ENCODE measurements at regions of chr10 and their contacts with region 1.

Region 1: GRCh38 chr10:110567201-110568054 is at the start of gene SMC3:
- ATAC-seq: peak; percentile 84 to 90 (median 88)
- H3K4me3 ChIP-seq: peak within 1 kb of the TSS; percentile 77 to 89 (median 85)
- H3K27ac ChIP-seq: peak within 1 kb of the TSS; percentile 99
- H3K4me1 ChIP-seq: peaks cover 6 to 21% of the 10 kb centered on the region in 2 donors
- total RNA-seq, gene SMC3: 15.2 to 92.6 (median 46.6) TPM

Region 2: GRCh38 chr10:110304780-110305421 is 262.5 kb before region 1 on chr10 and contains the start of gene SMNDC1:
- in situ Hi-C with region 1: loop called in 2 of 9 experiments (anchors 25 kb)
- ATAC-seq: peak; percentile 82 to 96 (median 94)
- H3K4me3 ChIP-seq: peak within 1 kb of the TSS; percentile 59 to 91 (median 67)
- H3K27ac ChIP-seq: peak within 1 kb of the TSS; percentile 88 to 93
- H3K4me1 ChIP-seq: peaks cover 6 to 24% of the 10 kb centered on the region in 2 donors
- total RNA-seq, gene SMNDC1: 8.3 to 24.0 (median 12.5) TPM

Region 3: GRCh38 chr10:110724116-110724921 is 156.9 kb after region 1 on chr10:
- in situ Hi-C with region 1: no loop called
- ATAC-seq: peak in 2 of 8 experiments; percentile 34 to 58
- H3K4me3 ChIP-seq: no peak overlapping the region
- H3K27ac ChIP-seq: no peak overlapping the region
- H3K4me1 ChIP-seq: peaks cover 17 to 50% of the 10 kb centered on the region in 2 donors

Region 4: DNA sequence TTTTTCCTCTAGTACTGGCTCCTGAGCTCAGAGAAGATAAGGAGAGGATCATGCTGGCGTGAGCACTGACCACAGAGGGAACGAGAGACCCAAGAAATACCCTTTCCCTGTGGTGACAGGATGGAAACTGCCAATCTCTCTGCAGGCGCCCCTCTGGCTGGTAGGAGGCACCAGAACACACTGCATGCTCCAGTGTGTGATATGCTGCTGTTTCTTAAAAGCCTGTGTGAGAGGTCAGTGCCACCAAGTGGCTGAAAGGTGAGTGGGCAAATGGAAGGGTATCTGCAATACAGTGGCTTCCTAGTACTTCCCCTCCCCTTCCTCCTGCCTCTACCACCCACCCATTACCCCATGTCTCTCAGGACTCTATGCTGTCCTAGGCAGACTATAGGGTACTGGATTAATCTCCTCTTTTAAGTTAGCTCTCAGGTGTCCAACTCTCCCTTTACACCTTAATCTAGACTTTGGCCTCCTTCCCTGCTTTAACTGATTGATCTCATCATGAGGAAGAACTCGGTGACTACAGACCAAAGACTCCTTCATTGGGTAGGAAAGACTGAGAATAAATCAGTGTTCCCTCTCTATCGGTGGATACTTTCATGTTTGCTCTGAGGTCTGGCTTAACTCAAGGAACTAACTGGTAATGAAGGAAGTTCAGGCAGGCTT is 793.0 kb after region 1 on chr10:
- in situ Hi-C with region 1: no loop called
- ATAC-seq: peak; percentile 76 to 100 (median 88)
- H3K4me3 ChIP-seq: no peak overlapping the region
- H3K27ac ChIP-seq: no peak overlapping the region
- H3K4me1 ChIP-seq: no peaks in the 10 kb centered on the region

Measured in motor neuron (in vitro differentiated cells).